ENCODE measurements at regions of chr15 and their contacts with region 1.

Region 1: DNA sequence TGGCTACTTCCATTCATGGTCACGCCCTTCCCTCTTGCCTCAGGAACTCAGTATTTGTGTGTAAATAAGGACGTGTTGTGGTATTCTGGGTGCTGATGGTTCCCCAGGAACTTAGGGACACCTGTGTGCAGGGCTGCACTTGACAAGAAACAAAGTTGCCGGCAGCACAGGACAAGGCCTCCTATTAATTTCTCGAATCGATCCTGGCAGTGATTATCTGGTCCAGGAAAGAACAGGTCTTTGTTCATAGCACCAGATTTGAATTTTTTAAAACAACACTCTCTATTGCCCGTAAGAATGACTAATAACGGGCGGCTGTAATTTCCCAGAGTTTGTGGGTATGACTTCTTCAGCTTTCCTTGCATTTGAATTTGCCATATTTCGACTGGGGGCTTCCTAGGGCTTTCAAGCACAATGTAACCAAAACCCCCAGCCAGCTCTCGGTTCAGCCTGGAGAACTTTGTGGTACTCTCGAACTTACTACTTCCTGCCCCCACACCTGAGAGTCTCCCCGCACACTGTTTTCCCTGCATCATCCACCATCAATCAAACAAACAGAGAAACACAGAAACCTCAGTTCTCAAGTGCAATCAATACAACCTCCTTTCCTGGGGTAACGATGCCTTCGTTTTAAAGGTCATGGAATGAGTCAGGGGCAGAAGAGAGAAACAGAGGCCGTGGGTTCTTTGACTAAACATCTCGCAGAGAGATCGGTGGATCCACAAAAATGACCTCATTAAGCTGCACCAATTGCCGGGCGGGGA is 241.7 kb upstream of the ICE2 start:
- DNase-seq: no peak
- ATAC-seq: no peak
- H3K4me3 ChIP-seq: no peak overlapping the region
- H3K27ac ChIP-seq: no peak overlapping the region
- H3K4me1 ChIP-seq: no peaks in the 10 kb centered on the region
- H3K27me3 ChIP-seq: no peaks in the 10 kb centered on the region

Region 2: DNA sequence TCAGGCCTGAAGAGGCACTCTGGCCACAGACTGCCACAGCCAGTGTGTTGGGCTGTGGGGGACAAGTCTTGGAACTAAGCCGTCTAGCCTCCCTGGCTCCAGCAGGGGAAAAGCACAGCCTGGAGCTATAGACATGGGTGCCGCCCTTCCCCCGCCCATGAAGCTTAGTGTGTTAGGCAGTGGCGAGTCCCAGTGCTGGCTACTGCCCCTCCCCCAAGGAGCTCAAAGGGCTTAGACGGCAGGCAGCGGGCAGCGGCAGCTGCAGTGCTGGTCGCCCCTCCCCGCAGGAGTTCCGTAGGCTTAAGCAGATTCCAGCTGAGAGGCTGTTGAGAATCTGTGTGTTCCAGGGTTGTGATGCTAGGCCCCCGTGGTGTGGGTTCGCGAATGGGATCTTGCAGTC is 644.2 kb after region 1 on chr15:
- intact Hi-C with region 1: loop called in 1 of 2 experiments (anchors 10 kb)
- DNase-seq: peak in 1 of 2 donors; percentile 32
- ATAC-seq: no peak
- H3K4me3 ChIP-seq: no peak overlapping the region
- H3K27ac ChIP-seq: no peak overlapping the region
- H3K4me1 ChIP-seq: no peaks in the 10 kb centered on the region
- H3K27me3 ChIP-seq: no peaks in the 10 kb centered on the region

Measured in aorta (tissue), 5 donors.